ENCODE measurements at regions of chr10 and their contacts with region 1.

Region 1: GRCh38 chr10:107144490-107144889 is 20.0 kb downstream of the SORCS1 start:
- DNase-seq: no peak
- ATAC-seq: peak; percentile 31 to 48
- H3K4me3 ChIP-seq: no peak overlapping the region
- H3K27ac ChIP-seq: no peak overlapping the region
- H3K4me1 ChIP-seq: no peaks in the 10 kb centered on the region
- H3K27me3 ChIP-seq: no peaks in the 10 kb centered on the region

Region 2: GRCh38 chr10:106711313-106711906 is 433.1 kb before region 1 on chr10:
- intact Hi-C with region 1: loop called in 1 of 4 experiments (anchors 10 kb)
- DNase-seq: peak in 2 of 3 donors; percentile 28 to 74
- ATAC-seq: no peak
- H3K4me3 ChIP-seq: no peak overlapping the region
- H3K27ac ChIP-seq: no peak overlapping the region
- H3K4me1 ChIP-seq: no peaks in the 10 kb centered on the region
- H3K27me3 ChIP-seq: no peaks in the 10 kb centered on the region

Region 3: DNA sequence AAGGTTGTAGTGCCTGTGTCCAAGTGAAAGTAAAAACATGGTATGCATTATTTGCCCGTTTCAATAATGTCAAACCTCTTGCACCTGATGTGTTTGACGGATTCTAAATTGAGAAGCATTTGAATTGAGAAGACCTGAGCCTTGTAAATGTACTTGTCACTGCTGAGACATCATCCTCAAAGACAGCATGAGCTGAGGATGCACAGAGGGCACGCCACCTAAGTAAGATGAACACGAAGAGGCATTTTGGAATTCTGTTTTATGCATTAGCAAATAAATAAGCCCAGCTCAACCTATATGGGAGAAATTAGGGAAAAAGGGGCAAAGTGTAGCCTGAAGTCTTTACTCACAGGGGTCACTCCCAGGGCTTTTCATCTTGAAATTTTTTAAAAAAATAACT is 93.8 kb after region 1 on chr10:
- intact Hi-C with region 1: no loop called
- DNase-seq: no peak
- ATAC-seq: no peak
- H3K4me3 ChIP-seq: no peak overlapping the region
- H3K27ac ChIP-seq: no peak overlapping the region
- H3K4me1 ChIP-seq: no peaks in the 10 kb centered on the region
- H3K27me3 ChIP-seq: no peaks in the 10 kb centered on the region

Measured in right cardiac atrium (tissue), 5 donors.